Natural killer cell (primary cell): ENCODE measurements at regions of chrX and their contacts with region 1.

Region 1: GRCh38 chrX:23782863-23783568 is at the start of gene SAT1:
- DNase-seq: peak; percentile 89 to 95
- ATAC-seq: peak; percentile 81 to 94 (median 88)
- H3K4me3 ChIP-seq: peak within 1 kb of the TSS; percentile 97
- H3K4me3 Mint-ChIP-seq: peak within 1 kb of the TSS; percentile 95
- H3K27ac ChIP-seq: peak within 1 kb of the TSS; percentile 97
- H3K27ac Mint-ChIP-seq: peak within 1 kb of the TSS; percentile 93 to 95
- H3K4me1 ChIP-seq: peaks cover 20% of the 10 kb centered on the region
- H3K4me1 Mint-ChIP-seq: peaks cover 27 to 36% of the 10 kb centered on the region in 2 donors
- H3K27me3 ChIP-seq: no peaks in the 10 kb centered on the region
- H3K27me3 Mint-ChIP-seq: no peaks in the 10 kb centered on the region
- CTCF ChIP-seq: peak; percentile 68
- total RNA-seq, gene SAT1: 276 to 667 (median 524) TPM

Region 2: GRCh38 chrX:23403853-23404252 is 379.2 kb before region 1 on chrX:
- intact Hi-C with region 1: no loop called
- DNase-seq: no peak
- ATAC-seq: no peak
- H3K4me3 ChIP-seq: no peak overlapping the region
- H3K4me3 Mint-ChIP-seq: no peak overlapping the region
- H3K27ac ChIP-seq: no peak overlapping the region
- H3K27ac Mint-ChIP-seq: no peak overlapping the region
- H3K4me1 ChIP-seq: no peaks in the 10 kb centered on the region
- H3K4me1 Mint-ChIP-seq: no peaks in the 10 kb centered on the region
- H3K27me3 ChIP-seq: no peaks in the 10 kb centered on the region
- H3K27me3 Mint-ChIP-seq: peaks cover 0 to 3% of the 10 kb centered on the region in 2 donors
- CTCF ChIP-seq: no peak

Region 3: DNA sequence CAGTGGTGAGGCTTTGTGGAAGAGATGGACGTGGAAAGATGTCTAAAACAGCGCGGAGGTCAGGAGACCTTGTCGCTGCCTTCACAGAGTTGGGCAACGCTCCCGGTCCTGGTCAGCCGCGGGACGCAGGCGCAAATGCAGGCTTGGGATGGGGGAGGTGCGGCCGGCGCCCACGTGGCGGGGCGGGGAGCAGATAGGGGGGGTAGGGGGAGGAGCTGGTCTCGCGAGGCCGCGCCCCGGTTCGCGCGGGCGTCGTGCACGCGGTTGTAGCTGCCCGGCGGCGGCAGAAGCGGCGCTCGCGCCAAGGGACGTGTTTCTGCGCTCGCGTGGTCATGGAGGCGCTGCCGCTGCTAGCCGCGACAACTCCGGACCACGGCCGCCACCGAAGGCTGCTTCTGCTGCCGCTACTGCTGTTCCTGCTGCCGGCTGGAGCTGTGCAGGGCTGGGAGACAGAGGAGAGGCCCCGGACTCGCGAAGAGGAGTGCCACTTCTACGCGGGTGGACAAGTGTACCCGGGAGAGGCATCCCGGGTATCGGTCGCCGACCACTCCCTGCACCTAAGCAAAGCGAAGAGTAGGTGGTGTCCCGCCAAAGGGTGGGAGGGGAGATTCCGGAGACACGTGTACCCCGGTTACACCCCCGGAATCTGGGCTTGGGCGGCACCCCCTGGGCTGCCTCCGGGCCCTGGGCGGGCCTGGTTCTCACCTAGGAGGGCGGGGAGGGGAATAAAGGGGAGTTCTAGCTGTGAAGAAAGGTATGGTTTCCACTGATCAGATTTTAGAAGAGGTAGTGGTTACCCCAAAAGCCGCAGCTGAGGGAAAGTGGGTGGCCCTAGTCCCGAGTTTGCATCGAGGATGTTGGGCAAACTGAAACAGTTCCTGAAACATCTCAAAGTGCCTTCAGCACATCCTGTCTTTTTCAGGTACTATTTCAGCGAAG is 115.5 kb before region 1 on chrX and contains the start of gene PRDX4:
- intact Hi-C with region 1: loop called (anchors 10 kb)
- DNase-seq: peak; percentile 58 to 81
- ATAC-seq: peak; percentile 92 to 98 (median 94)
- H3K4me3 ChIP-seq: peak within 1 kb of the TSS; percentile 78
- H3K4me3 Mint-ChIP-seq: peak within 1 kb of the TSS; percentile 86
- H3K27ac ChIP-seq: peak within 1 kb of the TSS; percentile 80
- H3K27ac Mint-ChIP-seq: peak within 1 kb of the TSS; percentile 77 to 85
- H3K4me1 ChIP-seq: peaks cover 6% of the 10 kb centered on the region
- H3K4me1 Mint-ChIP-seq: peaks cover 3 to 11% of the 10 kb centered on the region in 2 donors
- H3K27me3 ChIP-seq: no peaks in the 10 kb centered on the region
- H3K27me3 Mint-ChIP-seq: no peaks in the 10 kb centered on the region
- CTCF ChIP-seq: no peak
- total RNA-seq, gene PRDX4: 6.8 to 13.5 (median 7.8) TPM

Region 4: DNA sequence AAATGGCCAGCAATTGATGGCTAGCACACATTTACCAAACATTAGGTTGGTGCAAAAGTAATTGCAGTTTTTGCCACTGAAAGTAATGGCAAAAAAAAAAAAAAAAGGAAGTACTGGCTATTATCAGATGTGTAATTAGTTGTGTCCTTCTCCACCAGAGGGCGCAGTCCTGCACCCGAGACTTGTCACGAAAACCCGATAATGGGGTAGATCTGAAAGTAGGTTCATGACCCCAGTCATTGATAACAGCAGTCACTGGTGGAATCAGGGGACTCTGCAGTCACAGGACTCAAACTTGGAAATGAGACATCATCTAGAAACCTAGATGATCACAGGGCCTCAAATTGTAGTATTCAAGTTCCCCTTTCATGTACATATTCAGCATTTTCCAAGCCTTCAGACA is 26.9 kb before region 1 on chrX:
- intact Hi-C with region 1: loop called (anchors 1 kb)
- DNase-seq: peak; percentile 44 to 80
- ATAC-seq: peak; percentile 72 to 77 (median 75)
- H3K4me3 ChIP-seq: no peak overlapping the region
- H3K4me3 Mint-ChIP-seq: no peak overlapping the region
- H3K27ac ChIP-seq: no peak overlapping the region
- H3K27ac Mint-ChIP-seq: no peak overlapping the region
- H3K4me1 ChIP-seq: no peaks in the 10 kb centered on the region
- H3K4me1 Mint-ChIP-seq: no peaks in the 10 kb centered on the region
- H3K27me3 ChIP-seq: no peaks in the 10 kb centered on the region
- H3K27me3 Mint-ChIP-seq: no peaks in the 10 kb centered on the region
- CTCF ChIP-seq: peak; percentile 57

Region 5: GRCh38 chrX:23907498-23908218 is 124.6 kb after region 1 on chrX and contains the starts of genes APOO and CXorf58:
- intact Hi-C with region 1: loop called (anchors 2 kb)
- DNase-seq: peak; percentile 85 to 95
- ATAC-seq: peak; percentile 90 to 97 (median 90)
- H3K4me3 ChIP-seq: peak within 1 kb of the TSS; percentile 56
- H3K4me3 Mint-ChIP-seq: peak within 1 kb of the TSS; percentile 84
- H3K27ac ChIP-seq: peak within 1 kb of the TSS; percentile 94
- H3K27ac Mint-ChIP-seq: peak within 1 kb of the TSS; percentile 84 to 88
- H3K4me1 ChIP-seq: peaks cover 10% of the 10 kb centered on the region
- H3K4me1 Mint-ChIP-seq: peaks cover 6 to 7% of the 10 kb centered on the region in 2 donors
- H3K27me3 ChIP-seq: no peaks in the 10 kb centered on the region
- H3K27me3 Mint-ChIP-seq: no peaks in the 10 kb centered on the region
- CTCF ChIP-seq: peak; percentile 69
- total RNA-seq, gene APOO: 8.8 to 13.0 (median 10.0) TPM
- total RNA-seq, gene CXorf58: not detected

Region 6: DNA sequence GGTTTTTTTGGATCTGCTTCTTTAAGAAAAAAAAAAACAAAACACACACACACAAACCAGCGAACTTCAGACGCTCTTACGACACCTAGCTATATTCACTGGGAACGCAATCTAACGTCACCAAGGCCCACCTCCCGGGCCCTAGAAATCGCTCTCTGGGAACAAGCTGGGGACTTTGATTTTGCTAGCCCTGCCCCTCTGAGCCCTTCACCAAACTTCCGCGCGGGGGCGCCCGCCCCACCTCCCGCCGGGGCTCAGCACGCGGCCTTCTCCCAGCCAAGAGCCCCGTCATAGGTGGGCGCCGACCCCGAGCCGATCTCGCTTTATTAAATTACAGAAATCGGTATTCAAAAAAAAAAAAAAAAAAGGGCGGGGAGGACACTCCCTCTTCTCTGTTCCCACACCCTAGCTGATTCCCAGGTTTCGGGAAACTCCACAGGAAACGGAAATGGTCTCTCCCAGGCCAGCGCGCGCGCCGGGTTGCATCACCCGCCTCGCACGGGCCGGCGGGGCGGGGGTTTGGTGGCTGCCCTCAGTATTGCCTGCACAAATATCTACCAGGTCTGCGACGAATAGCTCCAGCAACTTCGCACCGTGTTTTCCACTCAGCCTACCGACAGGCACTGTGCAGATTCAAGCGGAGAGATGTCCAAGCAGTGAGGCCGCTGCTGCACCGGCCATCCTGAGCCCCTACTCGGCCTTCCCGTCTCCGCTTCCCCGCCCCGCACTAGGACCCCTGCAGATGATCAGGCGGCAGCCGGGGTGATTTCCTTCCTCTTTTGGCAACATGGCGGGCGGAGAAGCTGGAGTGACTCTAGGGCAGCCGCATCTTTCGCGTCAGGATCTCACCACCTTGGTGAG is 271.4 kb after region 1 on chrX and contains the start of gene EIF2S3:
- intact Hi-C with region 1: loop called (anchors 1 kb)
- DNase-seq: peak; percentile 76 to 91
- ATAC-seq: peak; percentile 82 to 94 (median 82)
- H3K4me3 ChIP-seq: peak within 1 kb of the TSS; percentile 62
- H3K4me3 Mint-ChIP-seq: no peak within 1 kb of the TSS
- H3K27ac ChIP-seq: peak within 1 kb of the TSS; percentile 93
- H3K27ac Mint-ChIP-seq: no peak within 1 kb of the TSS
- H3K4me1 ChIP-seq: peaks cover 6% of the 10 kb centered on the region
- H3K4me1 Mint-ChIP-seq: no peaks in the 10 kb centered on the region
- H3K27me3 ChIP-seq: no peaks in the 10 kb centered on the region
- H3K27me3 Mint-ChIP-seq: no peaks in the 10 kb centered on the region
- CTCF ChIP-seq: peak; percentile 48
- total RNA-seq, gene EIF2S3: 124 to 199 (median 132) TPM

Region 7: GRCh38 chrX:24253469-24253868 is 470.5 kb after region 1 on chrX:
- intact Hi-C with region 1: no loop called
- DNase-seq: no peak
- ATAC-seq: no peak
- H3K4me3 ChIP-seq: no peak overlapping the region
- H3K4me3 Mint-ChIP-seq: no peak overlapping the region
- H3K27ac ChIP-seq: no peak overlapping the region
- H3K27ac Mint-ChIP-seq: no peak overlapping the region
- H3K4me1 ChIP-seq: no peaks in the 10 kb centered on the region
- H3K4me1 Mint-ChIP-seq: no peaks in the 10 kb centered on the region
- H3K27me3 ChIP-seq: no peaks in the 10 kb centered on the region
- H3K27me3 Mint-ChIP-seq: peaks cover 11 to 58% of the 10 kb centered on the region in 2 donors
- CTCF ChIP-seq: no peak